PC-3 (cell line): ENCODE measurements at regions of chr1 and their contacts with region 1.

Region 1: GRCh38 chr1:64268653-64269557 is 65.5 kb downstream of the UBE2U start:
- DNase-seq: peak; percentile 87
- ATAC-seq: peak; percentile 97
- H3K4me3 ChIP-seq: peak overlapping the region; percentile 66
- H3K27ac ChIP-seq: peak overlapping the region; percentile 3; the same call in 1 of the 2 replicates
- H3K4me1 ChIP-seq: peaks cover 7% of the 10 kb centered on the region; the same call in 1 of the 2 replicates
- H3K27me3 ChIP-seq: no peaks in the 10 kb centered on the region
- CTCF ChIP-seq: peak; percentile 70

Region 2: DNA sequence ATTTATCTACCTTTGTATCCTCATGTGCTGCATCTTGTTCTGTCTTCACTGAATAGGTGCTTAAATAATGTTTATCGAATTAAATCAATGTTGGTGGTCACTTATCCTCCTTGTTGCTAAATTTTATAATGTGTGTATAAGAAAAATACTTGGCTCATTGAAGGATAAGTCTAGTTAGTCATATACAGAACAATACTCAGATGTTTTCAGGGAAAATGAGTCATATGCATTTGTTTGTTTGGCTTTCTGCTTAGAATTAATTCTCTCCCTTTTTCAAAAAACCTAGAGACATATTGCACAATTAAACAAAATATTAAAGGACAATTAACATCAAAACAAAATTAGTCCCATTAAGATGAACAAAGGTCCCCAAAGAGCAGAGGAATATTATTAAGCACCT is 23.5 kb after region 1 on chr1:
- CTCF ChIA-PET with region 1: no interaction called
- POLR2A ChIA-PET with region 1: no interaction called
- intact Hi-C with region 1: no loop called
- DNase-seq: peak; percentile 72
- ATAC-seq: peak; percentile 70
- H3K4me3 ChIP-seq: no peak overlapping the region
- H3K27ac ChIP-seq: peak overlapping the region; percentile 24
- H3K4me1 ChIP-seq: peaks cover 32% of the 10 kb centered on the region
- H3K27me3 ChIP-seq: no peaks in the 10 kb centered on the region
- CTCF ChIP-seq: no peak

Region 3: DNA sequence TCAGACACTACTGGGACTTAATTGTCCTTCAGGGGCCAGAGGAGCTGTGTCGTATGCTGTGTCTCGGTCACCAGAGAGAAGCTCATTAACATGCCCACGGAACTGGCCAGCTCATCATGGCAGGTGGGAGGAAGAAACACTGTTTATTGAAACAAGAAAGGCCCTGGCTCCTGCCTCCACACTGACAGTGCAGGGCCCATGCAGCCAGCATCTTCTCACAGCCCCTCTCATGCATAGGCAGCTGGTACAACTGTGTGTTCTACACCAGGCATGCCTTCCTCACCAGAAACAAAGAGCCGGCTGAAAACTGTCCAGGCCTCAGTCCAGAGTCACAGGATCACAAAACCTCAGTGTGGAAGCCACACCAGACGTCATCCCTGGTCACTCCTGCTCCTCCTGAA is 40.5 kb after region 1 on chr1:
- CTCF ChIA-PET with region 1: no interaction called
- POLR2A ChIA-PET with region 1: no interaction called
- intact Hi-C with region 1: no loop called
- DNase-seq: no peak
- ATAC-seq: no peak
- H3K4me3 ChIP-seq: no peak overlapping the region
- H3K27ac ChIP-seq: no peak overlapping the region
- H3K4me1 ChIP-seq: no peaks in the 10 kb centered on the region
- H3K27me3 ChIP-seq: no peaks in the 10 kb centered on the region
- CTCF ChIP-seq: no peak

Region 4: DNA sequence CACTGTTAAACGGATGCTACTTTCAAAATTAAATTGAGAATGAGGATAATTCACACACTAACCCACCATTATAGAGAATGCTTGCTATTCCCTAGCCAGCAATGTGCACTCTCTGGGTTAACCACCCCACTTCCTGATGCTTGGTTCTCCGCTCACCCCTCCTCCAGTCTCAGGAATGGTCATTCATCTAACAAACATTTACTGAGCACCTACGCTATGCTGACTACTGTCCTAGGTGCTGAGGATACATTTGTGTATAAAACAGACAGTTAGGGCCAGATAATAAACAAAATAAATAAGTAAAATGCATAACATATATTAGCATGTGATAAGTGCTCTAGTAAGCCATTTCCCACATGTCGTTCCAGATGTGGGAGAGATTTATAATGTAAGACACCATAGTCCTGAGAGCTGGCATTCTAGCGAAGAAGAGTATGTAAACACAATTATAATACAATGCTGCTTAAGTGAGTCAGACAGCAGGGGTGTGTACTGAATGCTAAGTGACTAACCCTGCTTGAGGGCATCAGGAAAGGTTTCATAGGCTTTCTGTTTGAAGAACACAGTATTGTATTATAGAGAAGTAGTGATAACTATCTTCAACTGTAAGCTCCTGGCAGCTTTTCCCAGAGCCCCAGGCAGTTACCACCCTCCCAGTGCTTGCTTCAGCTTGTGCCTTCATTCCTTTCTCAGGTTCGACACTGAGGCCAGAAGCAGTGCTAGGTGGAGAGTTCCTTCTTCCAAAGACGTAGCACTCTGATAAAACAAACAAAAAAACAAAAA is 74.4 kb after region 1 on chr1:
- CTCF ChIA-PET with region 1: interaction called, 10 read pairs
- POLR2A ChIA-PET with region 1: no interaction called
- intact Hi-C with region 1: loop called (anchors 2 kb)
- DNase-seq: peak; percentile 99
- ATAC-seq: peak; percentile 89
- H3K4me3 ChIP-seq: peak overlapping the region; percentile 31
- H3K27ac ChIP-seq: peak overlapping the region; percentile 97
- H3K4me1 ChIP-seq: peaks cover 36% of the 10 kb centered on the region
- H3K27me3 ChIP-seq: no peaks in the 10 kb centered on the region
- CTCF ChIP-seq: no peak

Region 5: DNA sequence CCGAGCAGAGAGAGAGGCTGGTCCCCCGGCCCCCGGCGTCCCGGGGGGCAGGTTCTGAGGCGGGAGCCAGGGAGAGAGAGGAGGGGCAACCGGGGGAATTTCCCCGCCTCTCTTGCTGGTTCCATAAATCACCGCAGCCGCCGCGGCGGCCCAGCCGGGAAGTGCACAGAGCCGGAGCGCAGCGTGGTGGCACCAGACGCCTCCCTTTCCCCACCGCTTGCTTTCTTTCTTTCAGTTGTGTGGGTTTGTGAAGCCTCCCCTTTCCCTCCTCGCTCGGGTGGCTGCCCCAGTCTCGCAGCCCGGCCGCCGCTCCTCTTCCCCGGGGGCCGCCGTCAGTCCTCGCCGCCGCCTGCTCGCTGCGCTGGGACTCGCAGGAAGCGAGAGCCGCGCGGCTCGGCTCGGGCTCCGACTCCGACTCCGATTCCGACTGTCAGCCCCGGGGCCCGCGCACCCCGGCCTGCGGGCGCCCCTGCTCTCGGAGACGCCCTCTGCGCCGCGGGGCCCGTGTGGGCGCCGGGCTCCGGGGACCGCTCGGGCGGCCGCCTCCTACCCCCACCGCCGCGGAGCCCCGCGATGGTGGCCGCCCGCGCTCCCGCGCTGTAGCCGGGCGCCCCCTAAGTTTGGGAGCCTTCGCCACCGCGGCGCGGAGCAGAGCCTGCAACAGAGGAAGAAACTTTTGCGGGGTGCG is 201.2 kb after region 1 on chr1 and contains the start of gene CACHD1:
- CTCF ChIA-PET with region 1: no interaction called
- POLR2A ChIA-PET with region 1: no interaction called
- intact Hi-C with region 1: loop called (anchors 1 kb)
- DNase-seq: peak; percentile 75
- ATAC-seq: peak; percentile 81
- H3K4me3 ChIP-seq: peak within 1 kb of the TSS; percentile 89
- H3K27ac ChIP-seq: no peak within 1 kb of the TSS
- H3K4me1 ChIP-seq: peaks cover 25% of the 10 kb centered on the region
- H3K27me3 ChIP-seq: no peaks in the 10 kb centered on the region
- CTCF ChIP-seq: no peak
- total RNA-seq, gene CACHD1: 6.6 TPM in 2 replicates

Region 6: GRCh38 chr1:64535938-64536835 is 267.3 kb after region 1 on chr1:
- CTCF ChIA-PET with region 1: no interaction called
- POLR2A ChIA-PET with region 1: no interaction called
- intact Hi-C with region 1: loop called (anchors 1 kb)
- DNase-seq: peak; percentile 65
- ATAC-seq: peak; percentile 84
- H3K4me3 ChIP-seq: peak overlapping the region; percentile 16; the same call in 1 of the 2 replicates
- H3K27ac ChIP-seq: peak overlapping the region; percentile 4; the same call in 1 of the 2 replicates
- H3K4me1 ChIP-seq: peaks cover 21% of the 10 kb centered on the region
- H3K27me3 ChIP-seq: no peaks in the 10 kb centered on the region
- CTCF ChIP-seq: no peak

Region 7: GRCh38 chr1:64675718-64676345 is 406.9 kb after region 1 on chr1:
- CTCF ChIA-PET with region 1: no interaction called
- POLR2A ChIA-PET with region 1: interaction called, 7 read pairs
- intact Hi-C with region 1: loop called (anchors 1 kb)
- DNase-seq: peak; percentile 38
- ATAC-seq: no peak
- H3K4me3 ChIP-seq: no peak overlapping the region
- H3K27ac ChIP-seq: no peak overlapping the region
- H3K4me1 ChIP-seq: no peaks in the 10 kb centered on the region
- H3K27me3 ChIP-seq: no peaks in the 10 kb centered on the region
- CTCF ChIP-seq: peak; percentile 49